ENCODE measurements at regions of chr2 and their contacts with region 1.

Region 1: GRCh38 chr2:169141713-169142352 is 72.5 kb downstream of the DHRS9 start:
- DNase-seq: no peak
- H3K4me3 ChIP-seq: no peak overlapping the region
- H3K27ac ChIP-seq: no peak overlapping the region
- H3K4me1 ChIP-seq: peaks cover 0 to 4% (median 0%) of the 10 kb centered on the region in 6 donors
- H3K27me3 ChIP-seq: no peaks in the 10 kb centered on the region
- CTCF ChIP-seq: peak; percentile 55 to 86 (median 81)
- POLR2A ChIP-seq: no peak

Region 2: GRCh38 chr2:168961450-168962229 is 180.2 kb before region 1 on chr2:
- intact Hi-C with region 1: loop called (anchors 5 kb)
- DNase-seq: no peak
- H3K4me3 ChIP-seq: no peak overlapping the region
- H3K27ac ChIP-seq: no peak overlapping the region
- H3K4me1 ChIP-seq: peaks cover 0 to 11% (median 3%) of the 10 kb centered on the region in 6 donors
- H3K27me3 ChIP-seq: no peaks in the 10 kb centered on the region
- CTCF ChIP-seq: peak; percentile 61 to 85 (median 77)
- POLR2A ChIP-seq: no peak

Region 3: GRCh38 chr2:169001116-169001815 is 140.6 kb before region 1 on chr2:
- intact Hi-C with region 1: no loop called
- DNase-seq: no peak
- H3K4me3 ChIP-seq: no peak overlapping the region
- H3K27ac ChIP-seq: no peak overlapping the region
- H3K4me1 ChIP-seq: peaks cover 0 to 3% (median 0%) of the 10 kb centered on the region in 6 donors
- H3K27me3 ChIP-seq: peaks cover 0 to 7% (median 0%) of the 10 kb centered on the region in 7 donors
- CTCF ChIP-seq: no peak
- POLR2A ChIP-seq: no peak

Region 4: DNA sequence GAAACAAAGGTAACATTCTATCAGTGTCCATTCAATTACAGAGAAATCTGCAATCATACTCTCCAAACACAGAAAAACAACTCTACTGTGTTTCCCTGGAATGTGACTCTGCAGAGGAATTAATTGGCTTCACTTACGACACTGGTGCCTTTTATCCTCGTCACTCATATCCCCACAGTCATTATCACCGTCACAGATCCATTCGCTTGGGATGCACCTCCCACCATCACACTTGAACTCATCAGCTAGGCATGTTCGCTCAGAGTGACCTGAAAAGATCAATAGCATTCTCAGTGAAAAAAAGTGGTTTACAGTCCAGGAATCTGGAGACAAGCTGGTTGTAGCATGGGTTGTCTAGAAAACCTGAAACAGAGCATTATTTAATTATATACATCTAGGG is 51.8 kb after region 1 on chr2:
- intact Hi-C with region 1: no loop called
- DNase-seq: no peak
- H3K4me3 ChIP-seq: no peak overlapping the region
- H3K27ac ChIP-seq: no peak overlapping the region
- H3K4me1 ChIP-seq: no peaks in the 10 kb centered on the region
- H3K27me3 ChIP-seq: no peaks in the 10 kb centered on the region
- CTCF ChIP-seq: no peak
- POLR2A ChIP-seq: no peak

Measured in spleen (tissue), 13 donors.